ENCODE measurements at regions of chr17 and their contacts with region 1.

Region 1: GRCh38 chr17:17356149-17356930 is 53.2 kb downstream of the NT5M start:
- DNase-seq: peak; percentile 80
- ATAC-seq: peak; percentile 73 to 79

Region 2: GRCh38 chr17:17063546-17064122 is 292.7 kb before region 1 on chr17:
- intact Hi-C with region 1: no loop called
- DNase-seq: peak; percentile 67
- ATAC-seq: peak; percentile 63 to 69

Region 3: DNA sequence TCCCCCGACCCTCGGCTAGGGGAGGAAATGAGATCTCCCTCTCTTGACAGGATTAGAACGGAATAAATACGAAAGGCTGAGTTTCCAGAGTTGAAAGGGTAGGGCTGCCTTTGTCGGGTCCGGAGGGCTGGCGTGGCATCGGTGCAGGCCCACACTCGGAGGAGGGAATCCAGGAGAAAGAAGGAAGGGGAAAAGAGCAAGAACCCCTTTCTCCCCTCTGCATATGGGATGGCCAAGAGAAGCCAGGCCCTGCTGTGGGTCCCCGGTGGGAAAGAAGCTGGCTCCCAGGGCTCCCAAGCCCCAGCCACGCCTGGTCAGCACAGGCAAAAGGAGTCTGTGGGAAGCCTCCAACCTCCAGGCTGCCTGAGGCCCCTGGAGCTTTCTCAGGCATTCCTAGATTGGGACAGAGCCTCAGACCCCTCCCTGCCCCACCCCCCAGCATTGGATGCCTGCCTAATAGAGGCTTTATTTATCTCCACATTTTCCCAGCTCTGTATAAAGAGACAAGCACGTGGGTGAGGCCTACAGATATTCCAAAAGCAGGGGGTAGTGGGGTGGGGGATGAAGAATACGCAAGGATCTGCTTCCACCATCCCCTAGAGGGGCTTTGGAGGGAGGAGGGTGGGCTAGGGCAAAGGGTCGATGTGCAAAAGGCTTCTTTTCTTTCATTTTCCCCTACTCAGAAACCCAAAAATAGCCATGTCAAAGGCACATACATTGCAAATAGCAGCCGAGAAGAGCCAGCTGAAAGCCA is 257.7 kb before region 1 on chr17:
- intact Hi-C with region 1: no loop called
- DNase-seq: peak; percentile 65
- ATAC-seq: peak; percentile 62 to 79

Region 4: GRCh38 chr17:17440010-17440843 is 83.9 kb after region 1 on chr17:
- intact Hi-C with region 1: loop called in 1 of 2 experiments (anchors 10 kb)
- DNase-seq: peak; percentile 56
- ATAC-seq: no peak

Region 5: DNA sequence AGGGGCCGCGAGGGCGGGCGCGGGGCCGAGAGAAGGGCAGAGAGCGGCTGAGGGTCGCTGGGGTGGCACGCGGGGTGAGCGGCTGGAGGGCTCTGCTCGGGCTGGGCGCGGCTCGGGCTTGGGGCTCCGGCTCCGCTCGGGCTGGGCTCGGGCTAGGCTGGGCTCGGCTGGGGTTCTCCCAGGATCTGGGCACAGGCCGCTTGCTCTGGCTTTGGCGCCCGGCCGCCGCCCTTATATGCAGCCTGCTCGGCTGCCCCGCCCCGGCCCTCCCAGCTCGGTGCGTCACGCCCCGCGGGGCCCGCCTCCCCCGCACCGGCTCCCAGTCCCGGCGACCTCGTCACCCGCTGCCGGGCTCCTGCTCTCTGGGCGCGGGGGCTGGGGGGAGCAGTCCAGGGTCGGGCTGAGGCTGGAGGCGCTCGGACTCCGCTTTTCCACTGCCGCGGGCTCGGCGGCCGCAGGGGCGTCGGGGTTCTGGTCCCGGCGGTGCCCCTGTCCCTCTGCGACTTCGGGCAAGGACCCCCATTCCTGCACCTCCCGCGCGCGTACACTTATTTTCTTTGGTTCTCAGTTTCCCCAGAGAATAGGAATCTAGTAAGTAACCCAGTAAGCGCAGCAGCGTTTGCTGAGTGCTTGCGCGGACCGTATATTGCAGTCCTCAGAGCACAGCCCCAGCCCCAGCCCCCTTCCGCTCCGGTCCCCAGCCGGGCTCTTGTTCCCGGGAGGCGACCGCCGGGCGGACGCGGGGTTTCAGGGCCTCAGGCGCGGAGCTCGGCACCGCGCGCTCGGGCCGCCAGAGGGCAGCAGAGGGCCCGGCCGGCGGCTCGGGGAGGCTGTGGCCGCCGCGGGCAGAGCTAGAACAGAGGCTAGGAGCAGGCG is 140.1 kb after region 1 on chr17 and contains the start of gene RASD1:
- intact Hi-C with region 1: loop called (anchors 5 kb)
- DNase-seq: peak; percentile 93
- ATAC-seq: peak; percentile 92 to 95
- total RNA-seq, gene RASD1: 35.3 to 55.1 TPM

Region 6: DNA sequence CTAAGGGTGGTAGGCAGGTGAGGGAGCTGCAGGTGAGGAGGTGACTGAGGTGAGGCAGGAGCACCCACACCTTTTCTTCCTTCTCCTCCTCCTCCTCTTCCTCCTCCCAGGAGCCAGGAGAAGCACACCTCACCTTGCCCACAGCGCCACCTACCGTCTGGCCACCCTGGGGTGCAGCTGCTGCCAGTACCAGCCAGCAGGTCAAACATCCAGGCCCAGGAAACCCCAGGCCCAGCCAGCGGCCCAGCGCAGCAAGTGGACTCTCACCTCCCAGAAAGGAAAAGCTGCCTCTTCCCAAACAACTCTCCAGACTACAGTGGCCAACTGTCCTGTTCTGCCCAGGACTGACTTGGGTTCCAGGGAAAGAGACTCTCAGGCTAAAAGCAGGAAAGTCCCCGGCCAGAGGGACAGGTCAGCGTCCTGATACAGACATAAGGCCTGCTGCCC is 212.4 kb after region 1 on chr17:
- intact Hi-C with region 1: loop called (anchors 2 kb)
- DNase-seq: peak; percentile 76
- ATAC-seq: peak; percentile 15 to 22

Region 7: GRCh38 chr17:17613708-17614114 is 257.4 kb after region 1 on chr17:
- intact Hi-C with region 1: loop called in 1 of 2 experiments (anchors 2 kb)
- DNase-seq: peak; percentile 46
- ATAC-seq: peak; percentile 87 to 91

Region 8: GRCh38 chr17:17641621-17642409 is 285.5 kb after region 1 on chr17:
- intact Hi-C with region 1: loop called (anchors 1 to 2 kb)
- DNase-seq: peak; percentile 80
- ATAC-seq: peak; percentile 84 to 89